Left cardiac atrium (tissue), 4 donors: ENCODE measurements at regions of chr2 and their contacts with region 1.

Region 1: GRCh38 chr2:237691908-237692600 is 64.7 kb downstream of the LRRFIP1 start:
- DNase-seq: peak; percentile 99
- ATAC-seq: peak; percentile 81 to 88

Region 2: DNA sequence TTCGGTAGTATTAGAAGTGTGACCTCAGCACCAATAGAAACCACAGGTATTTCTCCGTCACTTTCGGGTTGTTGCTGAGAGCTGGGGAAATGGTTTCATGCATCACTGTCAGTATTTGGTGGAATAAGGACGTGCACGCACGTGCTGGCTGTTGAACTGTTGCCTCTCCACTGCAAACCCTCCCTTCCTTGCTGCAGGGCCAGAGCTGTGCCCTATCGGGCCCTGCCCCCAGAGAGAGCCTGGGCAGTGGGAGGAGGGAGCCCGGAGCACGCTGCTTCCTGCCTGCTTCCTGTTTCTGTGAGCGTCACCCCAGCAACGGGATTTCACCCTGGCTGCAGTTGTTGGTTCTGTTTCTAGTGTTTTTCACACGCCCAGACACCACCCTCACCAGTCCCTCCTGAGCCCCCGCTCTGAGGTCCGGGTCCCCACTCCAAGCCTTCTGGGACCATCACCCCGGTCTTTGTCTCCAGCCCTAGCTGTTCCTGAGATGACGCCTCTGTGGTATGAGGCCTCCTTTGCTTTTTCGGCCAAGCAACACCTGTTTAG is 17.2 kb before region 1 on chr2:
- intact Hi-C with region 1: loop called in 1 of 2 experiments (anchors 2 kb)
- DNase-seq: peak; percentile 90
- ATAC-seq: peak; percentile 85

Region 3: GRCh38 chr2:237731663-237732062 is 39.6 kb after region 1 on chr2:
- intact Hi-C with region 1: loop called (anchors 5 kb)
- DNase-seq: no peak
- ATAC-seq: peak in 1 of 2 donors; percentile 36